Natural killer cell (primary cell): ENCODE measurements at regions of chr2 and their contacts with region 1.

Region 1: DNA sequence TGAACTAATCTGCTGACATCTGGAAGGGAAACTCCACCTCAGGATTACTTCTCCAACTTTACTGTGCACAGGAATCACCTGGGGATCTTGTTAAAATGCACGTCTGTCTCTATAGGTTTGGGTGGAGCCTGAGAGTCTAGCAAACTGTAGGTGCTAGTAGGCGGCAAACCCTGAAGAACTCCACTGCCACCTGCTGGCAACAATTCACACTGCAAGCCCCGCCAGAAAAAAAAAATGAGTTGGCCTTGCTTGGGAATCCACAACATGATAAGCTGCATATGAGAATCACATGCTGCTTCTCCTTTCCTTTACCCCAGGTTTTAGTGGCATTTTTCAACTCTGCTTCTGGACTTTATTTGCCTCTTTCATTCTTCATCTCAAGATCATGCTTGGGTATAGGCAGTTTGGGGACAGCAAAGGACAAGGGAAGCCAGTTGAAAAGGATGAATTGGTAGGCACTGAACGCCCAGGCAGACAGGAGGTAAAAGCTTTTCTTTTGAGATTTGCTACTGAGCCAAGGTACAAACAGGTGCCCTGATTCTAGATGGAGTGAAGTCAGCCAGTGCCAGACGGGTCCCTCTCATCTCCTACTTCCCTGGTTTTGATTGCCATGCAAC is 88.8 kb downstream of the VIT start:
- DNase-seq: peak; percentile 72 to 81
- ATAC-seq: peak; percentile 78 to 93 (median 90)
- H3K4me3 ChIP-seq: no peak overlapping the region
- H3K4me3 Mint-ChIP-seq: no peak overlapping the region
- H3K27ac ChIP-seq: no peak overlapping the region
- H3K27ac Mint-ChIP-seq: peak overlapping the region in 1 of 2 donors; percentile 31
- H3K4me1 ChIP-seq: peaks cover 17% of the 10 kb centered on the region
- H3K4me1 Mint-ChIP-seq: peaks cover 41 to 45% of the 10 kb centered on the region in 2 donors
- H3K27me3 ChIP-seq: no peaks in the 10 kb centered on the region
- H3K27me3 Mint-ChIP-seq: no peaks in the 10 kb centered on the region
- CTCF ChIP-seq: peak; percentile 94

Region 2: GRCh38 chr2:36461039-36461681 is 324.1 kb before region 1 on chr2:
- intact Hi-C with region 1: no loop called
- DNase-seq: peak in 1 of 2 donors; percentile 23
- ATAC-seq: peak; percentile 36 to 58 (median 53)
- H3K4me3 ChIP-seq: no peak overlapping the region
- H3K4me3 Mint-ChIP-seq: no peak overlapping the region
- H3K27ac ChIP-seq: no peak overlapping the region
- H3K27ac Mint-ChIP-seq: no peak overlapping the region
- H3K4me1 ChIP-seq: peaks cover 5% of the 10 kb centered on the region
- H3K4me1 Mint-ChIP-seq: peaks cover 11% of the 10 kb centered on the region in 2 donors
- H3K27me3 ChIP-seq: no peaks in the 10 kb centered on the region
- H3K27me3 Mint-ChIP-seq: no peaks in the 10 kb centered on the region
- CTCF ChIP-seq: no peak

Region 3: GRCh38 chr2:36753706-36754221 is 31.5 kb before region 1 on chr2:
- intact Hi-C with region 1: no loop called
- DNase-seq: no peak
- ATAC-seq: no peak
- H3K4me3 ChIP-seq: no peak overlapping the region
- H3K4me3 Mint-ChIP-seq: no peak overlapping the region
- H3K27ac ChIP-seq: no peak overlapping the region
- H3K27ac Mint-ChIP-seq: no peak overlapping the region
- H3K4me1 ChIP-seq: no peaks in the 10 kb centered on the region
- H3K4me1 Mint-ChIP-seq: no peaks in the 10 kb centered on the region
- H3K27me3 ChIP-seq: no peaks in the 10 kb centered on the region
- H3K27me3 Mint-ChIP-seq: peaks cover 19 to 74% of the 10 kb centered on the region in 2 donors
- CTCF ChIP-seq: no peak

Region 4: DNA sequence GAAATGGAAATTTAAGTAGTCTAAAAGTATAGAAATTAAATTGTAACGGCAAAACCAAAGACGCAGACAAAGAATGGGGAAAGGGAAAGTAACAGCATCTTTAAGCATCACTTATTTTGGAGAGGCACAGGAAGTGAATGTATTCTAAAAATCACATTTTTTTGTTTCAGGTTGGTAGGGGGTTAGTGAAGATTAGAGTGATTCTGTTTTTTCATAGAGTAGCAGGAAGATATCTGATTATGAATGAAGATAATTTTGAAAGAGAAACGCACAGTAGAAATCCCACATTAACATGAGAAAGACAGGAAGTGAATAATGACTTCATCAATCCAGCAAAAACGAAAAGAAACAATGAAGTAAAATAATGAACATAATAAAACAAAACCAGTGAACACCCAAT is 49.8 kb after region 1 on chr2:
- intact Hi-C with region 1: loop called (anchors 10 kb)
- DNase-seq: peak in 1 of 2 donors; percentile 20
- ATAC-seq: peak; percentile 82 to 92 (median 92)
- H3K4me3 ChIP-seq: no peak overlapping the region
- H3K4me3 Mint-ChIP-seq: peak overlapping the region; percentile 53
- H3K27ac ChIP-seq: peak overlapping the region; percentile 59
- H3K27ac Mint-ChIP-seq: peak overlapping the region; percentile 74 to 76
- H3K4me1 ChIP-seq: peaks cover 3% of the 10 kb centered on the region
- H3K4me1 Mint-ChIP-seq: peaks cover 11 to 14% of the 10 kb centered on the region in 2 donors
- H3K27me3 ChIP-seq: no peaks in the 10 kb centered on the region
- H3K27me3 Mint-ChIP-seq: no peaks in the 10 kb centered on the region
- CTCF ChIP-seq: no peak

Region 5: DNA sequence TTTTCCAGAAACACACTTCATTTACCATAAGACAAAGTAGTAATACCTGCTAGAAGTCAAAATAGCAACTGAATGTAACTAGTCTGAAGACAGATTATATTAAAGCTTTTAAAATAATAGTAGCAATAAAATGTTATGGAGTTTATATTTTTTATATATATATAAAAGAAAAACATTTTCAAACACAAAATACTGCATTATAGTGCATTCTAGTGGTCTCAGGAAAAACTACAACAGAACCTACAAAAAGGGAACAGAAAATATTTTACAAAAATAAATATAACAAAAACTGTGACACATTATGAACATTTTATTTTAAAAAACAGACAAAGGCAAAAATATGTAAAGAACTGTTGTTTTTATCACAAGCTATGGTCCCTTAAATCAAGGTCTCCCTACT is 133.0 kb after region 1 on chr2:
- intact Hi-C with region 1: loop called (anchors 1 kb)
- DNase-seq: no peak
- ATAC-seq: no peak
- H3K4me3 ChIP-seq: no peak overlapping the region
- H3K4me3 Mint-ChIP-seq: no peak overlapping the region
- H3K27ac ChIP-seq: no peak overlapping the region
- H3K27ac Mint-ChIP-seq: no peak overlapping the region
- H3K4me1 ChIP-seq: no peaks in the 10 kb centered on the region
- H3K4me1 Mint-ChIP-seq: peaks cover 7 to 12% of the 10 kb centered on the region in 2 donors
- H3K27me3 ChIP-seq: no peaks in the 10 kb centered on the region
- H3K27me3 Mint-ChIP-seq: no peaks in the 10 kb centered on the region
- CTCF ChIP-seq: peak; percentile 59

Region 6: GRCh38 chr2:37005118-37005868 is 220.0 kb after region 1 on chr2:
- intact Hi-C with region 1: loop called (anchors 1 kb)
- DNase-seq: peak in 1 of 2 donors; percentile 45
- ATAC-seq: peak; percentile 73 to 90 (median 89)
- H3K4me3 ChIP-seq: no peak overlapping the region
- H3K4me3 Mint-ChIP-seq: peak overlapping the region; percentile 61
- H3K27ac ChIP-seq: no peak overlapping the region
- H3K27ac Mint-ChIP-seq: peak overlapping the region; percentile 52 to 60
- H3K4me1 ChIP-seq: no peaks in the 10 kb centered on the region
- H3K4me1 Mint-ChIP-seq: peaks cover 8 to 15% of the 10 kb centered on the region in 2 donors
- H3K27me3 ChIP-seq: no peaks in the 10 kb centered on the region
- H3K27me3 Mint-ChIP-seq: no peaks in the 10 kb centered on the region
- CTCF ChIP-seq: peak; percentile 51